Naive thymus-derived CD4-positive, alpha-beta T cell (primary cell): ENCODE measurements at regions of chr13 and their contacts with region 1.

Region 1: DNA sequence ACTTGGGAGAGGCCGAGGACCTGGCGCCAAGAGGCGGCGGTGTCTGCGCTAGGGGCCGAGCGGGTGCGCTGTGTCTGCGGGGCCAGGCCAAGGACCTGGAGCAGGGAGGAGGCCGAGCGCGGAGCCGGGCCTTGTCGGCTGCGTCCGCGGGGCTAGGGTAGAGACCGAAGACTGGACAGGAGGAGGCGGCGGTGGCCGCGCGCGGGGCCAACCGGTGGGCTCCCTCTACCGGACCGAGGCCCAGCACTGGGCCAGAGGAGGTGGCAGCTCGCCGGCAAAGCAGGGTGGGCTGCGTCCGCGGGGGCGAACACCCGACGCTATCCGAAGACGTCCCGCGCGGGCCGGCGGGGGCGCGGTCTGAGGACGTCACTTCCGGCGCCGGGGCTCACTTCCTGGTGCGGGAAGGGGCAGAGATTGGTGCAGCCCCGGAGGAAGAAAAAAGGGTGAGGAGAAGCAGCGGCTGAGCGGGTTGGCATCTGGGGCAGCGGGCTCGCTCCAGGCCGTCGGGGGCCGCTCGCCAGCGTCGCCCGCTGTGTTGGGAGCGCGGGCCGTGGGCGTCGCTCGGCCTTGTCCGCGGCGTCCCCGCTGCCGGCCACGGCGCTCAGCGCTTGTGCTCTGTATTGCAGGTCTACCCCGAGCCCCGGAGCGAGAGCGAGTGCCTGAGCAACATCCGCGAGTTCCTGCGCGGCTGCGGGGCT is 38.3 kb downstream of the ARHGEF7 start:
- DNase-seq: peak; percentile 87 to 96 (median 93)
- ATAC-seq: peak; percentile 93
- H3K4me3 ChIP-seq: peak overlapping the region; percentile 73
- H3K4me3 Mint-ChIP-seq: peak overlapping the region; percentile 85 to 96 (median 92)
- H3K27ac ChIP-seq: peak overlapping the region; percentile 79
- H3K27ac Mint-ChIP-seq: peak overlapping the region; percentile 88 to 96 (median 90)
- H3K4me1 ChIP-seq: peaks cover 14 to 16% of the 10 kb centered on the region in 2 donors
- H3K4me1 Mint-ChIP-seq: peaks cover 14 to 38% (median 29%) of the 10 kb centered on the region in 7 donors
- H3K27me3 ChIP-seq: no peaks in the 10 kb centered on the region
- H3K27me3 Mint-ChIP-seq: peaks cover 0 to 33% (median 0%) of the 10 kb centered on the region in 5 donors

Region 2: DNA sequence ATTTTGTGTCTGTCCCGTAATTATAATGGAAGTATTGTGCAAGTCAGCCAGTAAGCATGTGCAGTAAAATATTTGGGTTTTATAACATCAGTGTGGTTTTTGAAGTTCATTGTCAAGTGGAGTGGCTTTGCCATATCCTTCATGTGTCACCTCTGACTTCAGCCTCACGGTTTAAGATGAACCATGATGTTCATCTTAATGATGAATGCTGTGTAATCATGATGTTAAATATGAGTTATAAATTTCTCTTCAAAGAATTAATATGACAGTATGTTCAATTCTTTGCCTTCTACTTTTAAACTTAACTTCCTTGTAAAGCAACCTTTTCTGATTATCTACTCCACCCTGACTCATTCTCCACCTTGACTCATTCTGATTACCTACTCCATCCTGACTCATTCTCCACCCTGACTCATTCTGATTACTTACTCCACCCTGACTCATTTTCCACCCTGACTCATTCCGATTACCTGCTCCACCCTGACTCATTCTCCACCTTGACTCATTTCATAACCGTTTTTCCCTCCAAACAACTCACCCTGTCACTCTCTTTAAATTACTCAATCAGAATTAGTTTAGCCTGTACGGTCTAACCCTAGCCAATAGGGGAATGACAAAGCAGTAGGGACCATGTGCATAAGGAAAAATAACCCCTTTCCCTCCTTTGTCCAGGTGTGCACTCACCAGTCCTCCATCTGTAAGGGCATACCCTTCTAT is 188.2 kb before region 1 on chr13:
- CTCF ChIA-PET with region 1: no interaction called
- POLR2A ChIA-PET with region 1: no interaction called
- intact Hi-C with region 1: loop called in 1 of 2 experiments (anchors 5 kb)
- DNase-seq: no peak
- ATAC-seq: peak; percentile 26
- H3K4me3 ChIP-seq: no peak overlapping the region
- H3K4me3 Mint-ChIP-seq: peak overlapping the region in 1 of 10 donors; percentile 37
- H3K27ac ChIP-seq: no peak overlapping the region
- H3K27ac Mint-ChIP-seq: peak overlapping the region in 1 of 9 donors; percentile 79
- H3K4me1 ChIP-seq: no peaks in the 10 kb centered on the region
- H3K4me1 Mint-ChIP-seq: peaks cover 0 to 16% (median 0%) of the 10 kb centered on the region in 7 donors
- H3K27me3 ChIP-seq: no peaks in the 10 kb centered on the region
- H3K27me3 Mint-ChIP-seq: peaks cover 0 to 18% (median 8%) of the 10 kb centered on the region in 5 donors

Region 3: DNA sequence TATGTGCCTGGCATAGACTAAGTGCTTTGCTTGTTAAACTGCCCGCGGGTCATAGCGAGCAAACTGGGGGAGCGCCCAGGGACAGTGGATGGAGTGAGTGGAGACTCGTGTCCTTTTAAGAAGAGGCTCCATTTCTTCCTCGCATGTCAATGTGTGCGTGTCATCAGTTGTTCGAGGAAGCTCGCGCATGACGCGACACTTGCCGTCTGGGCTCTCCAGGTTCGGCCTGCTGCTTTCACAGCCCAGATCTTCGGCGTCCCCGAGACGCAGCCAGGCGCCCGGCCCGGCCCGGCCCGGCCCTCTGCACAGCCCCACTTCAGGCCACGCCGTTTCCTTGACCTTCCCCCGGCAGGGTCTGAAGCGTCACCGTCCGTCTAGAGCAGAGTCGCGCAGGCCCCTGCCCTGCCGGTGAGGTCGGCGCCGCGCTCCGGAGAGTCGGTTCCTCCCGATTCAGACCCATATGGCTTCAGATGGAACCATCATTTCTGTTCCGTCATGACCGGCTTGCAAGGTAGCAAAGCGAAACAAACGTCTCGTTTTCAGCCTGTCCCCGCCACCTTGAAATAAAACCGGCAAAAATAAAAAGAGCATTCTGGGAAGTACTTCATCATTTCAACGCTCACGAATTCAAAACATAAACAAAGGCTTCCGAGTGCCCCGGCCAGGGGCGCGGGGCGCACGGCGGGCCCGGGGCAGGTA is 38.9 kb before region 1 on chr13:
- CTCF ChIA-PET with region 1: no interaction called
- POLR2A ChIA-PET with region 1: no interaction called
- intact Hi-C with region 1: loop called (anchors 2 kb)
- DNase-seq: peak in 7 of 9 donors; percentile 10 to 38 (median 30)
- ATAC-seq: peak; percentile 55
- H3K4me3 ChIP-seq: peak overlapping the region; percentile 65
- H3K4me3 Mint-ChIP-seq: peak overlapping the region; percentile 85 to 93 (median 90)
- H3K27ac ChIP-seq: no peak overlapping the region
- H3K27ac Mint-ChIP-seq: peak overlapping the region in 5 of 9 donors; percentile 29 to 65 (median 51)
- H3K4me1 ChIP-seq: peaks cover 0 to 5% of the 10 kb centered on the region in 2 donors
- H3K4me1 Mint-ChIP-seq: peaks cover 4 to 19% (median 17%) of the 10 kb centered on the region in 7 donors
- H3K27me3 ChIP-seq: peaks cover 9 to 19% of the 10 kb centered on the region in 2 donors
- H3K27me3 Mint-ChIP-seq: peaks cover 74 to 87% (median 78%) of the 10 kb centered on the region in 5 donors

Region 4: GRCh38 chr13:111177081-111177711 is 23.8 kb after region 1 on chr13:
- CTCF ChIA-PET with region 1: interaction called, 3 read pairs
- POLR2A ChIA-PET with region 1: interaction called, 8 read pairs
- intact Hi-C with region 1: loop called (anchors 1 kb)
- DNase-seq: peak in 8 of 9 donors; percentile 33 to 81 (median 79)
- ATAC-seq: peak; percentile 90
- H3K4me3 ChIP-seq: no peak overlapping the region
- H3K4me3 Mint-ChIP-seq: peak overlapping the region; percentile 53 to 88 (median 78)
- H3K27ac ChIP-seq: peak overlapping the region; percentile 75
- H3K27ac Mint-ChIP-seq: peak overlapping the region; percentile 92 to 100 (median 96)
- H3K4me1 ChIP-seq: peaks cover 6 to 77% of the 10 kb centered on the region in 2 donors
- H3K4me1 Mint-ChIP-seq: peaks cover 61 to 96% (median 89%) of the 10 kb centered on the region in 7 donors
- H3K27me3 ChIP-seq: no peaks in the 10 kb centered on the region
- H3K27me3 Mint-ChIP-seq: no peaks in the 10 kb centered on the region

Region 5: DNA sequence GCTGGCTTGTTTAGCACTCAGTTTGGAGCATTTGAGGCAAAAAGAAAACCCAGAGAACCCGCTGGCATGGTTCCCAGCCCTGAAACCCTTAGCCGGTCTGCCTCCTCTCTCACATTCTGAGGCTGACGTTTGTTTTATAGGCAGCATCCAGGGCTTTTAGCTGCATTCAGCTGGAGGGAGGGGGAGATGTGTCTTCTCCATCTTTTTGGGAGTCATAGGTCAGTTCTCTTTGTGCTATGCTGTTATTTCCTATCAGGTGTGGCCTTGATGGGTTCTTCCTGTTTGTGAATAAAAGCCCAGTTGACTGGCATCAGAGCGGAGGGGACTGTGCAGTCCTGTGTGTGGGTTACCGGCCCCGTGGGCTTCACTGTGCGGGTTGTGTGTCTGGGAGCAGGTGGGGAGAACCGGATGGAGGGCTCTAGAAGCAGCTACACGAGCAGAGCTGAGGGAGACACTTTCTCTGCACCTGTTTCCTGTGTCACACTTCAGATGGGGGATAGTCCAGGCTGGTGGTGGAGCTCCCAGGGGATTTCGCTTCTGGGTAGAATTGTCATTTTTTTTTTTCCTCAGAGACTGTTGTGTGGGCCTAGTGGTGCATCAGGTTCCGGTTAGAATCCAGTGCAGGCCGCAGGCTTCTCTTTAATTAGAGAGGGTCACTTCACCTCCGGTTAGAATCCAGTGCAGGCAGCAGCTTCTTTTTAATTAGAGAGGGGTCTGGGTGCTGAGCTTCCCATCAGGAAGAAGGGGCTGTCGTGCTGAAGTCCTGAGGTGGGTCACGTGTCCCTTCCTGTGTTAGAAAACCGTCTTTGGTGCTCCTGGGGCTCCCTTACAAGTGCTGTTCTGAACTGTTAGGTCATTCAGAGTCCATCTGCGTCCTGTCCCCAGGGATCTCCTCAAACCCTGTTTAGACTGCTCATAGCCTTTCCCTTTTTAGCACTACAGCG is 31.3 kb after region 1 on chr13:
- CTCF ChIA-PET with region 1: interaction called, 3 read pairs
- POLR2A ChIA-PET with region 1: interaction called, 10 read pairs
- intact Hi-C with region 1: loop called (anchors 1 kb)
- DNase-seq: peak in 7 of 9 donors; percentile 52 to 68 (median 55)
- ATAC-seq: peak; percentile 67
- H3K4me3 ChIP-seq: peak overlapping the region; percentile 22
- H3K4me3 Mint-ChIP-seq: peak overlapping the region; percentile 65 to 88 (median 82)
- H3K27ac ChIP-seq: peak overlapping the region; percentile 62
- H3K27ac Mint-ChIP-seq: peak overlapping the region; percentile 84 to 98 (median 93)
- H3K4me1 ChIP-seq: peaks cover 50 to 92% of the 10 kb centered on the region in 2 donors
- H3K4me1 Mint-ChIP-seq: peaks cover 84 to 100% (median 95%) of the 10 kb centered on the region in 7 donors
- H3K27me3 ChIP-seq: no peaks in the 10 kb centered on the region
- H3K27me3 Mint-ChIP-seq: no peaks in the 10 kb centered on the region

Region 6: DNA sequence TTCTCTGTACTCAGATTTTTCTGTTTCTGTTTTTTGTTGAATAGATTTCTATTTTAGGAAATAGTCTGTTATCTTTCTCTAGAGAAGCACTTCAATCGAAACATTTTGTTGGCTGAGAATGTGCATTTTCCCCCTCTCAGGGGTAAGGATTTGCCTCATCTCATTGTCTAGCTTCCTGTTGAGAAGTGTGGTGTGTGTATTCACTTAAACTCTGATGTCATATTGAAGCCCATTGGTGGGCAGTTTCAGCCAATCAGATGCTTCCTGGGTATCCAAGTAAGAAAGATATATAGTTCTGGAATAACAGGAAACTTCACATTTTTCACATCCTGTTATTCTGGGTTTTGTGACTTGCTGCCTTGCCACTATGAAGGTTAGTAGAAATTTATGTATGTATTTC is 49.3 kb after region 1 on chr13:
- CTCF ChIA-PET with region 1: no interaction called
- POLR2A ChIA-PET with region 1: interaction called, 3 read pairs
- intact Hi-C with region 1: loop called in 1 of 2 experiments (anchors 1 kb)
- DNase-seq: peak in 7 of 9 donors; percentile 51 to 72 (median 65)
- ATAC-seq: peak; percentile 85
- H3K4me3 ChIP-seq: no peak overlapping the region
- H3K4me3 Mint-ChIP-seq: peak overlapping the region in 9 of 10 donors; percentile 15 to 68 (median 48)
- H3K27ac ChIP-seq: peak overlapping the region; percentile 32
- H3K27ac Mint-ChIP-seq: peak overlapping the region; percentile 52 to 91 (median 85)
- H3K4me1 ChIP-seq: peaks cover 4 to 38% of the 10 kb centered on the region in 2 donors
- H3K4me1 Mint-ChIP-seq: peaks cover 56 to 89% (median 81%) of the 10 kb centered on the region in 7 donors
- H3K27me3 ChIP-seq: no peaks in the 10 kb centered on the region
- H3K27me3 Mint-ChIP-seq: no peaks in the 10 kb centered on the region

Region 7: GRCh38 chr13:111216166-111216960 is 62.9 kb after region 1 on chr13:
- CTCF ChIA-PET with region 1: interaction called, 3 read pairs
- POLR2A ChIA-PET with region 1: no interaction called
- intact Hi-C with region 1: loop called (anchors 1 to 2 kb)
- DNase-seq: peak in 8 of 9 donors; percentile 18 to 49 (median 30)
- ATAC-seq: peak; percentile 72
- H3K4me3 ChIP-seq: no peak overlapping the region
- H3K4me3 Mint-ChIP-seq: no peak overlapping the region
- H3K27ac ChIP-seq: no peak overlapping the region
- H3K27ac Mint-ChIP-seq: peak overlapping the region in 6 of 9 donors; percentile 34 to 88 (median 50)
- H3K4me1 ChIP-seq: no peaks in the 10 kb centered on the region
- H3K4me1 Mint-ChIP-seq: peaks cover 14 to 73% (median 57%) of the 10 kb centered on the region in 7 donors
- H3K27me3 ChIP-seq: no peaks in the 10 kb centered on the region
- H3K27me3 Mint-ChIP-seq: no peaks in the 10 kb centered on the region